CD4-positive, alpha-beta memory T cell (primary cell): ENCODE measurements at regions of chr17 and their contacts with region 1.

Region 1: GRCh38 chr17:78736526-78737079 is 45.5 kb downstream of the CYTH1 start:
- DNase-seq: peak; percentile 69 to 84 (median 77)
- H3K4me3 ChIP-seq: peak overlapping the region; percentile 64 to 71
- H3K4me3 Mint-ChIP-seq: peak overlapping the region; percentile 91 to 98 (median 98)
- H3K27ac ChIP-seq: peak overlapping the region; percentile 82
- H3K27ac Mint-ChIP-seq: peak overlapping the region; percentile 85 to 98 (median 95)
- H3K4me1 ChIP-seq: peaks cover 89% of the 10 kb centered on the region
- H3K4me1 Mint-ChIP-seq: peaks cover 69 to 94% (median 83%) of the 10 kb centered on the region in 4 donors
- H3K27me3 ChIP-seq: no peaks in the 10 kb centered on the region
- H3K27me3 Mint-ChIP-seq: no peaks in the 10 kb centered on the region

Region 2: GRCh38 chr17:78583091-78583490 is 153.5 kb before region 1 on chr17:
- CTCF ChIA-PET with region 1: no interaction called
- POLR2A ChIA-PET with region 1: no interaction called
- intact Hi-C with region 1: no loop called
- DNase-seq: no peak
- H3K4me3 ChIP-seq: no peak overlapping the region
- H3K4me3 Mint-ChIP-seq: no peak overlapping the region
- H3K27ac ChIP-seq: no peak overlapping the region
- H3K27ac Mint-ChIP-seq: peak overlapping the region in 1 of 7 donors; percentile 32
- H3K4me1 ChIP-seq: no peaks in the 10 kb centered on the region
- H3K4me1 Mint-ChIP-seq: peaks cover 0 to 2% (median 0%) of the 10 kb centered on the region in 4 donors
- H3K27me3 ChIP-seq: no peaks in the 10 kb centered on the region
- H3K27me3 Mint-ChIP-seq: peaks cover 2 to 7% of the 10 kb centered on the region in 2 donors

Region 3: GRCh38 chr17:78716814-78717393 is 19.7 kb before region 1 on chr17:
- CTCF ChIA-PET with region 1: interaction called, 10 read pairs
- POLR2A ChIA-PET with region 1: interaction called, 125 read pairs
- intact Hi-C with region 1: loop called (anchors 2 kb)
- DNase-seq: peak in 2 of 5 donors; percentile 29 to 55
- H3K4me3 ChIP-seq: no peak overlapping the region
- H3K4me3 Mint-ChIP-seq: peak overlapping the region; percentile 56 to 87 (median 76)
- H3K27ac ChIP-seq: no peak overlapping the region
- H3K27ac Mint-ChIP-seq: peak overlapping the region; percentile 38 to 92 (median 89)
- H3K4me1 ChIP-seq: peaks cover 98% of the 10 kb centered on the region
- H3K4me1 Mint-ChIP-seq: peaks cover 73 to 95% (median 85%) of the 10 kb centered on the region in 4 donors
- H3K27me3 ChIP-seq: no peaks in the 10 kb centered on the region
- H3K27me3 Mint-ChIP-seq: no peaks in the 10 kb centered on the region

Region 4: GRCh38 chr17:78723001-78723796 is 13.4 kb before region 1 on chr17:
- CTCF ChIA-PET with region 1: interaction called, 10 read pairs
- POLR2A ChIA-PET with region 1: interaction called, 125 read pairs
- intact Hi-C with region 1: loop called (anchors 2 kb)
- DNase-seq: no peak
- H3K4me3 ChIP-seq: no peak overlapping the region
- H3K4me3 Mint-ChIP-seq: peak overlapping the region; percentile 56 to 91 (median 70)
- H3K27ac ChIP-seq: no peak overlapping the region
- H3K27ac Mint-ChIP-seq: peak overlapping the region in 6 of 7 donors; percentile 77 to 92 (median 86)
- H3K4me1 ChIP-seq: peaks cover 100% of the 10 kb centered on the region
- H3K4me1 Mint-ChIP-seq: peaks cover 77 to 97% (median 90%) of the 10 kb centered on the region in 4 donors
- H3K27me3 ChIP-seq: no peaks in the 10 kb centered on the region
- H3K27me3 Mint-ChIP-seq: no peaks in the 10 kb centered on the region

Region 5: DNA sequence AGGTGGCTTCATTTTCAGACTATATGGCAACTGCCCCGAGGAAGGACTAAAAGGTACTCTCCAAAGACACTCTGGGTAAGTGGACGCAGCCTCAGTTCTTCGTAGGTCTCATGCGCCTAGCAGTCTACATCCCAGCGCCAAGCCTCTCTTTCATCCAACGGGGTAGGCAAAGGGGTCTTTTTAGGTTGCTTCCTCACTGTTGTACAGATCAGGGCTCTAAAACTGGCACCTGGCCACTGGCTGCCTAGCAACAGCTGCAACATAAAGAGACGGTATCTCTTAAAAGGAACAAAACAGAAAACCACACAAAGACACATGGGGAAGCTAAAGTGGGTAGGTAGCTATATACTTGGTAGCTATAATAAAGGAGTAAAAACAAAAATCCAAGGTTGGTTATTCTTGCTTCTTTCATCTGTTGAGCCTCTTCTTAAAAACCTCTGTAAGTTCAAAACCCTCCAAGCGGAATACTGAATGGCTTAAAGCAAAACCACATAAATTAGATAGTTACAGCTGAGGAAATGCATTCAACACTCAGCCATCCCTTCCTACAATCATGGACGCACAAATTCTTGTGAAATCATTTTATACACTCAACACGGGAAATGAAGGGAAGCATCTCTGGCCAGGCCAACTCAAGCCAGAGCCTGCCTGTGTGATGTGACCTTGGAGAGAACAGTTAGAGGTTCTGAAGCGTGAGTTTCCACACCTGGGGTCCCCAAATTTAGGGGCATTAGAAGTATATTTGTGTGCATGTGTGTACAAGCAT is 22.8 kb after region 1 on chr17:
- CTCF ChIA-PET with region 1: interaction called, 8 read pairs
- POLR2A ChIA-PET with region 1: interaction called, 23 read pairs
- intact Hi-C with region 1: no loop called
- DNase-seq: peak; percentile 87 to 95 (median 92)
- H3K4me3 ChIP-seq: peak overlapping the region; percentile 26 to 51
- H3K4me3 Mint-ChIP-seq: peak overlapping the region; percentile 67 to 92 (median 83)
- H3K27ac ChIP-seq: peak overlapping the region; percentile 88
- H3K27ac Mint-ChIP-seq: peak overlapping the region; percentile 91 to 99 (median 98)
- H3K4me1 ChIP-seq: peaks cover 94% of the 10 kb centered on the region
- H3K4me1 Mint-ChIP-seq: peaks cover 56 to 88% (median 61%) of the 10 kb centered on the region in 4 donors
- H3K27me3 ChIP-seq: no peaks in the 10 kb centered on the region
- H3K27me3 Mint-ChIP-seq: no peaks in the 10 kb centered on the region

Region 6: DNA sequence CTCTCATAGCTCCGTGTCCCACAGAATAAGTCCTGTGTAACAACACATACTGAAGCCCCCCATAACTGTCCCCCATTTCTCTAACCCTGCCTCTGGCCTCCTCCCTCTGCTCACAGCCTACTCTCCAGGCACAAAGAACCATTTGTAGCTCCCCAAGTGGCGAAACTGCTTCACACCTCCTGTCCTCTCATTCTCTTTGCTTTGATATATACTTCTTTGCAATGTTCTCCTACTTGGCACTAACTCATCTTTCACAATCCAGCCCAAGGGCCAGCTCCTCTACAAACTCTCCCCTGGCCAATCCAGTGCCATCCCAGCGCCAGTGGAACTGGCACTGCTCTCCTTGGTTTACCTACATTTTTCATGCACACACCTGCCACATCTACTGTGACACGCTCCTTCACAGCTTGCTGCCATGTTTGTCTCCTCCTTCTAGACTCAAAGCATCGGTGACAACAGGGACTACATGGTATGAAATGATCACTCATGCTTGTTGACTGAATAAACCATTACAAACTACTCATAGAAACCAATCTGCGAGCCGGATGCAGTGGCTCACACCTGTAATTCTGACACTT is 32.7 kb after region 1 on chr17:
- CTCF ChIA-PET with region 1: interaction called, 20 read pairs
- POLR2A ChIA-PET with region 1: interaction called, 23 read pairs
- intact Hi-C with region 1: no loop called
- DNase-seq: peak in 2 of 5 donors; percentile 44 to 54
- H3K4me3 ChIP-seq: peak overlapping the region in 1 of 2 donors; percentile 7
- H3K4me3 Mint-ChIP-seq: no peak overlapping the region
- H3K27ac ChIP-seq: peak overlapping the region; percentile 49
- H3K27ac Mint-ChIP-seq: no peak overlapping the region
- H3K4me1 ChIP-seq: peaks cover 98% of the 10 kb centered on the region
- H3K4me1 Mint-ChIP-seq: peaks cover 32 to 34% (median 33%) of the 10 kb centered on the region in 4 donors
- H3K27me3 ChIP-seq: no peaks in the 10 kb centered on the region
- H3K27me3 Mint-ChIP-seq: no peaks in the 10 kb centered on the region

Region 7: DNA sequence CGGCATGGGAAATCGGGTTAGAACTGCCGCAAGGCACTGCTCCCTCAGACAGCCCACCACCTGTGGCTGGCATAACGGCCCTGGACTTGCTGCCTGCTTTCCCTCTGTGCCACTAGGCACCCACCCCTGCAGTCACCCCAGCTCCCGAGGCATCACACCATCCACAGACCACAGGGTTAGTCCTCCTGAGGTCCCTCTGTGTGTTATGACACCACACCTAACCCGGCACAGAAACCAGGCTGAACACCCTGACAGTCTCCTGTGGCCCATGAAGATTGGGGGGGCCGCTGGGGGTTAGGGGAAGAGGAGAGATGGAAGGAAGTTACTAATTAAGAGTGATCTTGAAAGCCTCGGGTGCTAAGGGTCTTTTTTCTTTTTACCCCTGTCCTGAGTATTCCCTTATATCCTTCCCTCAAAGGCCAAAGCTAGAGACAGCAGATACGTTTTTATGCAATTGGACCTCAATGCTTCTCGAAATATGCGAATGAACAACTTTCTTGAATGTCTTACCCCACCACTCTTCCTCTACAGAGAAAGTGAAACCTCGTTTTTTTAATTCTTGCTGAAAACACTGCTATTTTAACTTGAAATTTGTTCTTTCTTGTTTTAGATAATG is 38.5 kb after region 1 on chr17:
- CTCF ChIA-PET with region 1: interaction called, 20 read pairs
- POLR2A ChIA-PET with region 1: interaction called, 101 read pairs
- intact Hi-C with region 1: loop called (anchors 5 kb)
- DNase-seq: peak; percentile 57 to 85 (median 63)
- H3K4me3 ChIP-seq: peak overlapping the region; percentile 64 to 70
- H3K4me3 Mint-ChIP-seq: peak overlapping the region; percentile 88 to 97 (median 94)
- H3K27ac ChIP-seq: peak overlapping the region; percentile 81
- H3K27ac Mint-ChIP-seq: peak overlapping the region; percentile 92 to 99 (median 97)
- H3K4me1 ChIP-seq: peaks cover 94% of the 10 kb centered on the region
- H3K4me1 Mint-ChIP-seq: peaks cover 45 to 82% (median 57%) of the 10 kb centered on the region in 4 donors
- H3K27me3 ChIP-seq: no peaks in the 10 kb centered on the region
- H3K27me3 Mint-ChIP-seq: no peaks in the 10 kb centered on the region